MCF 10A (cell line): ENCODE measurements at regions of chr18 and their contacts with region 1.

Region 1: DNA sequence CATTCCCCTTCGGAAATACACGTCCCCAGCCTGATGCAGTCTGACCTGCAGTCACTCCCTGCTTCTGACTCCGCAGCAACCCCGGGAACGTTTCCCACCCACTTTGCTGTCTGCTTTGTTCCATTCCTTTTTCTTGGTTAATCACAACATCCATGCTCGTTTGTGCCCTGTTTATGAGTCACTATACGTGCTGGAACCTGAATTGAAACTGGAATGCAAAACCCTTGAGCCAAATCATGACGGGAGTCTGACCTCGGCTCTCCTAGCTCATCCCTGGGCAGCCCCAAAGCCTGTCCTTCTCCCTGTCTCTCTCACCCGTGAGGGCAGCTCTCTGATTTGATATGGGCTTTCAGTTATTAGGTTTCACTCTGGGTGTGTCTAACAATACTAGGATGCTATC is 57.1 kb upstream of the RNF152 start:
- DNase-seq: peak; percentile 94
- H3K4me3 Mint-ChIP-seq: peak overlapping the region; percentile 70
- H3K27ac Mint-ChIP-seq: peak overlapping the region; percentile 73
- H3K4me1 Mint-ChIP-seq: peaks cover 35% of the 10 kb centered on the region
- H3K27me3 Mint-ChIP-seq: no peaks in the 10 kb centered on the region
- CTCF ChIP-seq: no peak

Region 2: GRCh38 chr18:61551586-61551985 is 398.4 kb before region 1 on chr18:
- CTCF ChIA-PET with region 1: no interaction called
- POLR2A ChIA-PET with region 1: no interaction called
- intact Hi-C with region 1: no loop called
- DNase-seq: peak; percentile 78
- H3K4me3 Mint-ChIP-seq: no peak overlapping the region
- H3K27ac Mint-ChIP-seq: no peak overlapping the region
- H3K4me1 Mint-ChIP-seq: no peaks in the 10 kb centered on the region
- H3K27me3 Mint-ChIP-seq: no peaks in the 10 kb centered on the region
- CTCF ChIP-seq: peak; percentile 81

Region 3: GRCh38 chr18:61635901-61636528 is 313.9 kb before region 1 on chr18:
- CTCF ChIA-PET with region 1: no interaction called
- POLR2A ChIA-PET with region 1: no interaction called
- intact Hi-C with region 1: no loop called
- DNase-seq: peak; percentile 61
- H3K4me3 Mint-ChIP-seq: peak overlapping the region; percentile 1
- H3K27ac Mint-ChIP-seq: peak overlapping the region; percentile 2
- H3K4me1 Mint-ChIP-seq: peaks cover 7% of the 10 kb centered on the region
- H3K27me3 Mint-ChIP-seq: no peaks in the 10 kb centered on the region
- CTCF ChIP-seq: peak; percentile 66

Region 4: GRCh38 chr18:61992923-61993322 is 43.0 kb after region 1 on chr18:
- CTCF ChIA-PET with region 1: no interaction called
- POLR2A ChIA-PET with region 1: interaction called, 15 read pairs
- intact Hi-C with region 1: no loop called
- DNase-seq: peak; percentile 24
- H3K4me3 Mint-ChIP-seq: no peak overlapping the region
- H3K27ac Mint-ChIP-seq: peak overlapping the region; percentile 68
- H3K4me1 Mint-ChIP-seq: peaks cover 21% of the 10 kb centered on the region
- H3K27me3 Mint-ChIP-seq: no peaks in the 10 kb centered on the region
- CTCF ChIP-seq: no peak